Endothelial cell of umbilical vein (primary cell): ENCODE measurements at regions of chr6 and their contacts with region 1.

Region 1: GRCh38 chr6:136503303-136504029 is 46.8 kb downstream of the MAP7 start:
- DNase-seq: no peak
- H3K4me3 ChIP-seq: no peak overlapping the region
- H3K27ac ChIP-seq: no peak overlapping the region
- H3K4me1 ChIP-seq: no peaks in the 10 kb centered on the region
- H3K27me3 ChIP-seq: no peaks in the 10 kb centered on the region
- CTCF ChIP-seq: no peak
- POLR2A ChIP-seq: no peak

Region 2: DNA sequence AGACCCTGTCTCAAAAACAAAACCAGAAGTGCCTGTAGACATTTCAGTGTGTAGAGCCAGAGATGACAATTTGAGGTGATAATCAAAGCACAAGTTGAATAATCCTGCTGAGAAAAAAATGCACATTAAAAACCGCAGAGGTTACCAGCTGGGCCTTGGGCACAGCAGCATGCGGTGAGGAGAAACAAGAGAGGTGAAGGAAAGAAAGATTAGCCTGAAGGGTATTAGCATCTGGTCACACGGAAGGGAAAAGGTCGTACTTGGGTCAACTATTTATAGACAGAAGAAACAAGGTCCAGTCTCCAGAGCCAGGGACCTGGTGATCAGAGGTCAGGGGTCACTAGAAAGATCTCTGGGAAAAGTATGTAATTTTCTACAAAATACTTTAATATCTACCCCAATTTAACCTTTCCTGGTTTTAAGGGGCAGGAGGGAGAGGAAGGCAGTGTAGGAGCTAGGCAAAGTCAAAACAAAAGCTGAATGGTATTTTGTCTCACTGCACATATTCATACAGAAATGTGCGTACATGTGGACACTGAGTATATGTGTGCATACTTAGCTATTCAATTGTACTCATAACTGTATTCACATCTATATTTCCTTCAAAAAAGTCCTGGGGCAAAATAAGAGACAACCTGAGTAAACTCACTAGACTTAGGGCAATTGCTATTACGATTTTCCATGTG is 36.6 kb after region 1 on chr6:
- CTCF ChIA-PET with region 1: no interaction called
- POLR2A ChIA-PET with region 1: no interaction called
- dilution Hi-C with region 1: no loop called
- intact Hi-C with region 1: loop called (anchors 2 kb)
- DNase-seq: no peak
- H3K4me3 ChIP-seq: no peak overlapping the region
- H3K27ac ChIP-seq: no peak overlapping the region
- H3K4me1 ChIP-seq: no peaks in the 10 kb centered on the region
- H3K27me3 ChIP-seq: peaks cover 5 to 10% of the 10 kb centered on the region in 2 experiments
- CTCF ChIP-seq: no peak
- POLR2A ChIP-seq: no peak